ENCODE measurements at regions of chr7 and their contacts with region 1.

Region 1: GRCh38 chr7:24572997-24573625 is at the start of gene PALS2:
- DNase-seq: peak in 1 of 2 donors; percentile 87
- H3K4me3 ChIP-seq: peak within 1 kb of the TSS; percentile 86 to 99
- H3K27ac ChIP-seq: peak within 1 kb of the TSS; percentile 88 to 95
- H3K4me1 ChIP-seq: peaks cover 0 to 8% of the 10 kb centered on the region in 2 donors
- H3K27me3 ChIP-seq: no peaks in the 10 kb centered on the region
- CTCF ChIP-seq: no peak
- total RNA-seq, gene PALS2: 5.7 TPM

Region 2: DNA sequence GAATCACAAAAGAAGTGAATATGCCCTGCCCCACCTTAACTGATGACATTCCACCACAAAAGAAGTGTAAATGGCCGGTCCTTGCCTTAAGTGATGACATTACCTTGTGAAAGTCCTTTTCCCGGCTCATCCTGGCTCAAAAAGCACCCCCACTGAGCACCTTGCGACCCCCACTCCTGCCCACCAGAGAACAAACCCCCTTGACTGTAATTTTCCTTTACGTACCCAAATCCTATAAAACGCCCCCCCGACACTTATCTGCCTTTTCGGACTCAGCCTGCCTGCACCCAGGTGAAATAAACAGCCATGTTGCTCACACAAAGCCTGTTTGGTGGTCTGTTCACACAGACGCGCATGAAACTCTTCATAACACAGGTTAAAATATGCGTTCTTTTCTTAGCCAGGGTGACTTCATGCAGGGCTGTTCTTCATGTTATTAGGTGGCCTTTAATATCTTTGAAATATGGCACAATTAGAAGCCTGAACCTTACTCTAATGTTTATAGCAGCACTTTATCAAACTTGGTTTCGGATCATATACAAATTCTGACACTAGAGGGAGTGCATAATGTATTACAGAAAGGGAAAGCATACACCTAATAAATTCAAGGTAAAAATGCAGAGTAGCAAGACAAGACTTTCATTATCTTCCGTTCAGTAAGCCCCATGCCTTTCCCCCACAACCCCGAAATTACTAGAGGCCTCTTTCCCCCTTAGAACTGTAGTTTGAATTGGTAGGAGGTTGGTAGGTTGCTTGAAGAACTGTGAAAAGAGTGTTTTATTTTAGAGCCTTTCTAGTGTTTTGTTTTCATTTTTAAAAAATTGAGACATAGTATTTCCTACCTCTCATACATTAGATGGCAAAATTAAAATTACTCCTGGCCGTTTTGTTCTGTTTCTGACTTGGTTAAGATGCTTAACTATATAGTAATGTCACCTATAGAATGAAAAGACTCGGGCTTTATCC is 171.2 kb before region 1 on chr7:
- intact Hi-C with region 1: loop called (anchors 5 kb)
- DNase-seq: no peak
- H3K4me3 ChIP-seq: peak overlapping the region in 1 of 2 donors; percentile 42
- H3K27ac ChIP-seq: no peak overlapping the region
- H3K4me1 ChIP-seq: no peaks in the 10 kb centered on the region
- H3K27me3 ChIP-seq: no peaks in the 10 kb centered on the region
- CTCF ChIP-seq: peak in 2 of 3 experiments; percentile 34 to 55

Region 3: DNA sequence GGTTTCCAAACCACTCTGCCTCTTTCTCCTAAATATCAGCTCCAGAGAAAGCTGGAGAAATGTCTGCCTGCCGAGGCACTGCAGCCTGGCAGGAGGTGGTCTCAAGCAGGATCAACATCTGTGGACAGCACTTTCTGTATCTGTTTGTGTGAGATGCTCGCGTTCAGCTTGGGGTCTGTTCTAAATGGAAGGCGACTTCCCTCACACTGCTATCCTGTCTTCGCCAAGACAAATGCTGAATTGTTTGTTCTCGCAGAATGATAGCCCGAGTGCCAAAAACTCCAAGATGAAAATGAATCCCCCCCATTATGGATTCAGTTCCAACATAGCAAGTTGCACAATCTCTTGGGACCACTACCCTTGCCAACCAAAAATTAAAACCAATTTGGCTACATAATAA is 72.1 kb before region 1 on chr7:
- intact Hi-C with region 1: loop called (anchors 5 kb)
- DNase-seq: no peak
- H3K4me3 ChIP-seq: peak overlapping the region in 1 of 2 donors; percentile 33
- H3K27ac ChIP-seq: peak overlapping the region in 1 of 2 donors; percentile 29
- H3K4me1 ChIP-seq: peaks cover 0 to 12% of the 10 kb centered on the region in 2 donors
- H3K27me3 ChIP-seq: no peaks in the 10 kb centered on the region
- CTCF ChIP-seq: no peak

Region 4: DNA sequence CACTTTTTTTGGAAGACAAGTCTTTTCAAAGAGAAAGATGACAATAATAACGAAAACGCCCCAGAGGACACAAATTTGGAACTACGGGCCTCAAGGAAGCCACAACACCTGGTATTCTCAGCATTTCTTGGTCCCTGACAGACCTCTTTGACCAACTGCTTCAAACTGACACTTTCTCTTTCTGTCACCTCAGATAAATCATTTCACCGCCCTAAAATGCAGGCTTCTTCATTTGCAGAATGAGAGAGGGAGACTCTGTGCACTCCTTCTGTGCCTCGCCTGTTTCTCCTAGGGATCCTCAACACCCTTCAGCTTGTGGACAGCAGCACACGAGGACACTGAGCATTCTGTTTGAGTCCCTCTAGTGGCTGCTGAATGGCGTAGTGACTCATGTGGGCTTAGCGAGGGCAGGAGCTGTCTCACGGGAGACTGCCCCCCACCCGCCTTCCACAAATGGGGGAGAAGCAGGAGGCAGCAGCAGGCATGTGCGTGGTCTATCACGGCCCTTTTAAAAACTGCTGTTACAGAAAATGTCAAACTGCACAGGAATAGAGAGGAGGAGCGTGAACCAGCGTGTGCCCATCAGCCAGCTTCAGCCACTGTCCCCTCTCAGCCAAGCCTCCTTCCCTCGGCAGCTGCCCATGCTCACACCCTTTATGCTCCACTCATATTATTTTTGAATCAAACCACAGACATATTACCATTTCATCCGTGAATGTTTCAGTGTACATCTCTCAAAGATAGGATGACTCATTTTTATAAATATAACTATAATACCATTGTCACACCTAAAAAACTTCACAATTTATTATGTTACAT is 142.8 kb after region 1 on chr7:
- intact Hi-C with region 1: no loop called
- DNase-seq: no peak
- H3K4me3 ChIP-seq: no peak overlapping the region
- H3K27ac ChIP-seq: no peak overlapping the region
- H3K4me1 ChIP-seq: no peaks in the 10 kb centered on the region
- H3K27me3 ChIP-seq: no peaks in the 10 kb centered on the region
- CTCF ChIP-seq: peak in 1 of 3 experiments; percentile 14

Region 5: DNA sequence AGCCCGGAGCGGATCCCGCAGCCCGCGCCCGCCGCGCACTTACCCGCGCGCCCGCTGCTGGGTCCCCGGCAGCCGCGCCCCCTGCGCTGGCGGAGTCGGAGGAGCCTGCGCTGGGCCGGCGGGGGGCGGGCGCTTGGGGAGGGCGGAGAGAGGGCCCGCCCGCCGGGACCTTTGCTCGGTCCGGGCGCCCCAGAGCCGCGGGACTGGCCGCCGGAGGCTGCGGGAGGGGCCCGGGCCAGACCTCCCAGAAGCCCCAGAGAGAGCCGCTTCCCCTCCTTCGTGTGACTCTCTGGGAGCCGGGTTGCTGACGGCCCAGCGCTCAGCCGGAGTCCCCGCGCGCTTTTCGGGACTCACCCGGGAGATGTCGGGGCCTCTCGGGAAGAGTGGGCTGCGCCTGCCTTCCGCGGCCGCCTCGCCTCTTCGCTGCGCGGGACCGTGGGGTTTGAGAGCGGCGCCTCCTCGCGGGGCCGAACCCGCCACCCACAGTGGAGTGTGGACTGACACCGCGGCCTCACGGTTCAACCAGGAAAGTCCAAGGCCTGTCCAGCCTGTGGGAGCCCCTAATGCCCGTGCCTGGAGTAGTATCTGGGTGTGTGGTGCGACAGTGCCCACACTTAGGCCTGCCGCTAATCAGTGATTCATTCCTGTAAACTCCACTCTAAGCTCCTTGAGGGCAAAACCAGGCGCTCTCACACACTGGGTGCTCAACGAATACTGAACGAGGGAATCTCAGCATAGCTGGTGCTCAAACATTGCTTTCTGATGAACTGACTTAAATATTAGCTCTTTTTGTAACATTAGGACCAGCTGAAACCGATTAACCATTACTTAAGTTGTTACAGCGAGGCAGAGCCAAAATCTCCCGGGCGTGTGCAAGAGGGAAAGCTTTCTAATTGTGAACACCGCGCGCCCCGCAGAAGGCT is 184.5 kb after region 1 on chr7 and contains the start of gene GSDME:
- intact Hi-C with region 1: loop called (anchors 2 kb)
- DNase-seq: peak in 1 of 2 donors; percentile 80
- H3K4me3 ChIP-seq: peak within 1 kb of the TSS; percentile 78 to 85
- H3K27ac ChIP-seq: peak within 1 kb of the TSS; percentile 94 to 95
- H3K4me1 ChIP-seq: peaks cover 0 to 4% of the 10 kb centered on the region in 2 donors
- H3K27me3 ChIP-seq: no peaks in the 10 kb centered on the region
- CTCF ChIP-seq: peak in 1 of 3 experiments; percentile 8
- total RNA-seq, gene GSDME: 14.9 TPM

Region 6: DNA sequence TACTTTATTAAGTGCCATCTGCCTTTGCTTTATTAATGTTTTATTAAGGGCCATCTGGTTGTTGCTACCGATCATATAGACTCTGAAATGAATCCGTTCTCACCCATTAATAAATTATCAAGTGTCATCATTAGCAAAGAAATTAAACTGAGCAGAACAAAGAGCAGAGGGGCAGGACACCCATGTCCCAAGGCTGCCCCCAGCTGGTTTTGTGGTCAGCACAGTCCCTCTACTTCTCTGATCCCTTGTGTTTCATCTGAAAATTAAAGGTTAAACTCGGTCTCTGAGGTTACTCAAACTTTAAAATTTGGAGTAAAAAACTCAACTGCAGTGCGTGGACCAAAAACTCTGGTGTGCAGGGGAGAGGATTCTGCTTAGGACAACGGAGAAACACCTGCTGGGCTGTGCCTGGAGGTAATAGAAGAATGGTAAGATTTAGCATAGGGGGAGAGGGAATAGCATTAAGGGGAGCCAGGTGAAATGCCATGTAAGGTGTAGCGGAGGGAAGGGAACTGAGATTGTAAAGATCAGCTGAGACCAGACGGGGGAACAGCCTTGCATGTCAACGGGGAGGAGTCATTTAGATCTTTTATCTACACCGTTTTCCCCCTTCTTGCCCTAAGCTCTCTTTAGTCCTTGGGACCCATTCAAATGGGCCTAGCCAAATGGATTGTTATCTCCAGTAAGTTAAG is 194.9 kb after region 1 on chr7:
- intact Hi-C with region 1: no loop called
- DNase-seq: no peak
- H3K4me3 ChIP-seq: no peak overlapping the region
- H3K27ac ChIP-seq: no peak overlapping the region
- H3K4me1 ChIP-seq: no peaks in the 10 kb centered on the region
- H3K27me3 ChIP-seq: no peaks in the 10 kb centered on the region
- CTCF ChIP-seq: no peak

Region 7: GRCh38 chr7:25125137-25125946 is 552.2 kb after region 1 on chr7 and contains the start of gene CYCS:
- intact Hi-C with region 1: loop called (anchors 10 kb)
- DNase-seq: peak; percentile 98 to 100
- H3K4me3 ChIP-seq: peak within 1 kb of the TSS; percentile 82 to 100
- H3K27ac ChIP-seq: peak within 1 kb of the TSS; percentile 90 to 99
- H3K4me1 ChIP-seq: peaks cover 0 to 4% of the 10 kb centered on the region in 2 donors
- H3K27me3 ChIP-seq: no peaks in the 10 kb centered on the region
- CTCF ChIP-seq: no peak
- total RNA-seq, gene CYCS: 11.5 TPM